Activated T-helper 2 cell treated with anti-CD3 and anti-CD28 coated beads, Interferon-gamma antibody, Interleukin-2, Interleukin-4, amounts not matched to agents 10 μg/mL and 5 μg/mL and 100 μg/mL, durations not matched to agents 14 hours and 24 hours and 36 hours (primary cell): ENCODE measurements at regions of chr2 and their contacts with region 1.

Region 1: DNA sequence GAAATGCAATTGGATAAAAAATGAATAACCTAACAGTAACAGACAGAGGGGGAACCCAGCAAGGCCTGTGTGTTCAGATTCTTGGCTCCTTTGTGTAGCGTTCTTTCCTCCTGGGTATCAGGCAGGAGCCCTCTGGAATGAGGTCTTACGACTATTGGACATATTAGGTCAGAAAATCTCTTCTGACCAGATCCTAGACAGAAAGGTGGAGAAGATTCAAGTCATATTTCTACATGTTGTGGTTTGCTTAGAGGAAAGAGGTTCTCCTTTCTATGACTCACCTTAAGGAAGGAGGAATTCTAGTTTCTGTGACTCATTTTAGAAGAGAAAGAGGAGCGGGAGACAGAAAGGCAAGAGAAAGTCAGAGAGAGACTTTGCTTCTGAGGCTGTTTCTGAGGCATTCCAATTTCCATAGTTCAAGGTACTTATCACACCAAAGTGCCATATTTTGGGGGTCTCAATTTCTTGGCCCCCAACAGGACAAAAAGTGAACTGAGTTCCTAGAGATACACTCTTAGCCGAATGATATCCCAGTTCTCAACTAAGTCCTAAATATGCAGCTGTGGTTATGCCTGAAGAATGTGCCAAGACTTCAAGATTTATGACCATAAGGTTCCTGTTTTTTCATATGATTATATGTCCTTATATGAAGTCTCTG is 618.6 kb downstream of the ZEB2 start:
- DNase-seq: no peak
- H3K4me3 Mint-ChIP-seq: no peak overlapping the region
- H3K27ac Mint-ChIP-seq: no peak overlapping the region
- H3K4me1 Mint-ChIP-seq: peaks cover 16% of the 10 kb centered on the region
- H3K27me3 Mint-ChIP-seq: peaks cover 34% of the 10 kb centered on the region

Region 2: DNA sequence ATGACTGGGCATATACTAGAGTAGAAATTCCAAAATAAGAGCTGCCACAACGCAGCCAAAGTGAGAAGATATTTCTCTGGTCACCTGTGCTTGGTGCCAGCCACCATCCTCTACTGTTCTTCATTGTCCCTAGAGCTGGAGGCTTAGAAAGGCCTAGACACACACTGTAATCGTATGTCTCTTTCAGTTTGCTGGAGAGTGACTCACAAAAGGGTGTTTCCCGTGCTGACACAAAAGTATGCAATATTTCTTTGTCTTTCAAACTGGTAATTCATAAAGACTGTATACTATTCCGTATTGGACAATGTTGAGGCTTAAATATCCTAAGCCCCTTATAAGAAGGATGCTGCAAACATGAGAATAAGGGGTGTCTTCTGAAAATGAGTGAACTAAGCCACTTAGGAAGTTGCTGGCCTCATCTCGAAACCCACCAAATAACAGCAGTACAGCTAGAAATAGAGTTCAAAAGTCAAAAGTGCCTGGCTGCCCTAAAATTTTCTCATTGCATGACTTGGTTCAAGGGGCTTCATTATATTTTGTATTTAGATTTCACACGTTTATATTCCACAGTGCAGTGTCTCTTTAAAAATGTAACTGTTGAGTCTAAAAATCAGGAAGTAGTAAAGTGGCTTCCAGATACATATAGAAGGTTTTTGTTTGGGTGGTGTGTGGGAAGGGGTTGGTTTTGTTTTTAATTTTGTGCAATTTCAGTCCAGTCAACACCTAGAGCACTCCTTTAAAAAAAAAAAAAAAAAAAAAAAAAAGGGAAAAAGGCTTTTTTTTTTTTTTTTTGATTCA is 171.0 kb before region 1 on chr2:
- intact Hi-C with region 1: loop called (anchors 1 kb)
- DNase-seq: no peak
- H3K4me3 Mint-ChIP-seq: peak overlapping the region; percentile 9
- H3K27ac Mint-ChIP-seq: peak overlapping the region; percentile 67
- H3K4me1 Mint-ChIP-seq: peaks cover 24% of the 10 kb centered on the region
- H3K27me3 Mint-ChIP-seq: no peaks in the 10 kb centered on the region

Region 3: DNA sequence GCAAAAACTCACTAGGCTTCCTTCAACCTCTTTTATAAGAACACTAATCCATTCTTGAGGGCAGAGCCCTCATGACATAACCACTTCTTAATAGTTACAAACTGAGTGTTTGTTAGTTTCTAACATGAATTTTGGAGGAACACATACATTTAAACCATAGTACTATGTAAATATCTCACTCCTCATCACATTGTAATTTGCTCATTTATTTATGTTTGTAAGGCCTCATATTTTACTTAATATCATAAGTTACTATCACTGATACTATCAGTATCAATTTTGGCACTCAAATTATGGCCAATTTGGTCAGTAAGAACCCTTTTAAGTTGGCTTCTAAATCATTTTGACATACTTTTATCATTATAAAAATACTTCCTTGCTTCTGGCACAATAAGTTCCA is 15.5 kb after region 1 on chr2:
- intact Hi-C with region 1: no loop called
- DNase-seq: no peak
- H3K4me3 Mint-ChIP-seq: no peak overlapping the region
- H3K27ac Mint-ChIP-seq: no peak overlapping the region
- H3K4me1 Mint-ChIP-seq: no peaks in the 10 kb centered on the region
- H3K27me3 Mint-ChIP-seq: no peaks in the 10 kb centered on the region

Region 4: DNA sequence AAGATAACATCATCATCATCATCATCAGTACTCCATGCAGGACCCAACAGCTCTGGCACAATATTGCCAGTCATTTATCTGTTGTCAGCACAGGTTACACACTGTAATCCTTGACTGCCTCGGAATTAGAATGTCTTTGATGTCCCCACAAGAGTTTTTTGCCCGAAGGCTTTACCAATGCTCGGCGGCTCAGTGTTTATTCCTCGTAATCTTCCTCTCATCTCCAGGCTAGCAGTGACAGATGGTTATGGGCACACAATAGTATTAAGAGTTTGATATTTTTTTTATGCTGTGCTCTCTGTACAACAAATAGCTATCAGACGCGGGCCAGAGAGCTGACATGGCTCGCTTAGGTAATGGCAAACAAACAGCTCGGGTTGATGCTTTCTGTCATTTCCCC is 103.4 kb after region 1 on chr2:
- intact Hi-C with region 1: no loop called
- DNase-seq: no peak
- H3K4me3 Mint-ChIP-seq: no peak overlapping the region
- H3K27ac Mint-ChIP-seq: no peak overlapping the region
- H3K4me1 Mint-ChIP-seq: no peaks in the 10 kb centered on the region
- H3K27me3 Mint-ChIP-seq: no peaks in the 10 kb centered on the region

Region 5: GRCh38 chr2:144924827-144925226 is 1023.5 kb after region 1 on chr2:
- intact Hi-C with region 1: loop called (anchors 5 kb)
- DNase-seq: no peak
- H3K4me3 Mint-ChIP-seq: no peak overlapping the region
- H3K27ac Mint-ChIP-seq: no peak overlapping the region
- H3K4me1 Mint-ChIP-seq: peaks cover 3% of the 10 kb centered on the region
- H3K27me3 Mint-ChIP-seq: peaks cover 2% of the 10 kb centered on the region